GM10248 (cell line): ENCODE measurements at regions of chr16 and their contacts with region 1.

Region 1: DNA sequence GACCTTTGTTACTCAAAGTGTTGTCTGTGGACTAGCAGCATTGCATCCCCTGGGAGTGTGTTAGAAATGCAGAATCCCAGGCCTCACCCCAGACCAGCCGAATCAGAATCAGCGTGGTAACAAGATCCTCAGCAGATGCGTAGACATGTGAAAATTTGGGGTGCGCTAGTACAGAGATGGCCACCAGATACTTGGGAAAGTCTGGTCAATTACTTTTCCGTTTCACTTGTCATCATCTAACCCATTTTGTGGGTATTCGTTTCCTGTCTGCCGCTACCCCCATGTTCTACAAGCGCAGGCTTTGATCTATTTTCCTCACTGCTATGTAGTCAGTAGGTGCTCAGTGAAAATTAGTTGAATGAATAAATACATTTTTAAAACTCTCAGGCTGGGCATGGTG is 33.1 kb upstream of the HERPUD1 start:
- DNase-seq: peak; percentile 70
- CTCF ChIP-seq: no peak

Region 2: GRCh38 chr16:56911771-56912571 is 13.1 kb after region 1 on chr16:
- CTCF ChIA-PET with region 1: interaction called, 13 read pairs
- POLR2A ChIA-PET with region 1: no interaction called
- DNase-seq: peak; percentile 83
- CTCF ChIP-seq: no peak

Region 3: GRCh38 chr16:57277586-57277985 is 378.7 kb after region 1 on chr16:
- CTCF ChIA-PET with region 1: no interaction called
- POLR2A ChIA-PET with region 1: no interaction called
- DNase-seq: no peak
- CTCF ChIP-seq: no peak